Right ventricle myocardium inferior (tissue), 1 donor: ENCODE measurements at regions of chr5 and their contacts with region 1.

Region 1: DNA sequence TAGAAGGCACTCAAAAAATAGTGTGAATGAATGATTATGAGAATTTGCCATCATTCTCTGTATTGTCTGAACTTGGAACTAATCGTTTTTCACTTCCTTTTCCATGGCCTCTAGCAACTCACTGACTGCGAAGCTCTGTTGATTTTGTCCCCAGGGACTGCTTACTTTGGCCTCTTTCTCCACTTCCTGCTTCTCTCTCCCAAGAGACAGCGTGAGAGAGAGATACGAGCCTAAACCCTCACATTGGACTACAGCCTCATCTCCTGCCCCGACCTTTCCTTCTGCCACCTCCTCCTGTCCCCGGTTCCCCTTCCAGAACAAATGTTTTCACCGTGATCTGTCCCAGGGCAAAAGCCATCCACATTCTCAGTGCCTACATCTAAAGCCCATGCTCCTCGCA is 300.8 kb upstream of the PANK3 start:
- DNase-seq: no peak
- ATAC-seq: peak; percentile 62

Region 2: DNA sequence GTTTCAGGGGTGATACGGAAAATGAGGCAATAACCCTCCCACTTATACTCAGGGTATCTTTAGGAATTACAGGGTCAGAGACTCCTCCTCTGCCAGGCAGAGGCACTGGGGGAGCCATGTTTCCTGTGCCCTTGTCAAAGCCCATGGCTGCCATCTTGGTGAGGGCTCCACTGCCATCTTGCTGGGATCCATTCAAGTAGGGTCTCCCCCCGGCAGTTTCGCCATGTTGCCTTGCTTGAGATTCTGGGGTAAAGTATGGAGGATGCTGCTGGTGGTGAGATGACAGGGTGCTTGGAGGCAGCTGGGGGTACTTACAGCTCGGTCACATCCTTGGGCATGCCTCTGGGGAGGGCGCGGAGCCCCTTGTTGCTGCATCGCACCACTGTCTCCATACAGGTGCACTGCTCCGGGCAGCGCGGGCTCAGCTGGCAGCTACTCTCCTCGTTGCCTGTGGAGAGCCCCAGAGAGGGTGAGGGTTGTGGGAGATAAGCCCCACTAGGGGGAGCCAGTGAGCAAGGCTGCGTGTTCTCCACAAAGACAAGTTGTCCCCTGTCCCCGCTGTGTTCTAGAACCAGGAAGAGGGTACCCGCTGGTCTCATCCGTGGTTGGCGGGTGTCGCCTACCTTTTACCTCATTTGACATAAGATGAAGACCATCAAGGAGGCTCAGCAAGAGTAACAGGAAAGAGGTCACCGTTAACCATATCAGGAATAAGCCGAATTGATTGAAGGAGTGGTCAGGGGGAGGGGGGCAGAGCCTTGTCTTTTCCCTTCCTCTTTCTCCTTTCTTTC is 131.7 kb before region 1 on chr5:
- intact Hi-C with region 1: loop called (anchors 10 kb)
- DNase-seq: no peak
- ATAC-seq: peak; percentile 64